ENCODE measurements at regions of chr7 and their contacts with region 1.

Region 1: GRCh38 chr7:49875336-49875735 is 101.9 kb downstream of the VWC2 start:
- DNase-seq: no peak
- ATAC-seq: no peak
- H3K4me3 ChIP-seq: no peak overlapping the region
- H3K27ac ChIP-seq: no peak overlapping the region
- H3K4me1 ChIP-seq: no peaks in the 10 kb centered on the region
- H3K27me3 ChIP-seq: no peaks in the 10 kb centered on the region
- CTCF ChIP-seq: no peak

Region 2: GRCh38 chr7:49885593-49886285 is 10.4 kb after region 1 on chr7:
- CTCF ChIA-PET with region 1: no interaction called
- POLR2A ChIA-PET with region 1: no interaction called
- in situ Hi-C with region 1: no loop called
- intact Hi-C with region 1: no loop called
- DNase-seq: no peak
- ATAC-seq: no peak
- H3K4me3 ChIP-seq: no peak overlapping the region
- H3K27ac ChIP-seq: no peak overlapping the region
- H3K4me1 ChIP-seq: no peaks in the 10 kb centered on the region
- H3K27me3 ChIP-seq: no peaks in the 10 kb centered on the region
- CTCF ChIP-seq: no peak

Region 3: DNA sequence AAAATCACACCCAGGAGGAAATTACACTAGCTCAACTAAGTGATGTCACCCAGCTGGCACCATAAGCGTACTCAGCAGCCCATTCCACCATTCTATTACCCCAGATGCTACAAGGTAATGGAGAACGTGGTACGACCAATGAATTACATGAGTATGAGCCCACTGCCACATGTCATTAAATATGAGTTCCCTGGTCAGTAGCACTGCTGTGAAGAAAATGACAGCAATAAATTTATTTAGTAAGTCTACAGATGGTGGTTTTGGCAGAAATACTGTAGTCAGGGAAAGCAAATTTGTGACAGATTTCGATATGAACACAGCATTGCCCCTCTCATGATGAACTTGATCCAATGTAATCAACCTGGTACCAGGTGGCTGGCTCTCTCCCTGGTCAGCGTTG is 52.3 kb after region 1 on chr7:
- CTCF ChIA-PET with region 1: no interaction called
- POLR2A ChIA-PET with region 1: no interaction called
- in situ Hi-C with region 1: no loop called
- intact Hi-C with region 1: no loop called
- DNase-seq: no peak
- ATAC-seq: no peak
- H3K4me3 ChIP-seq: no peak overlapping the region
- H3K27ac ChIP-seq: no peak overlapping the region
- H3K4me1 ChIP-seq: no peaks in the 10 kb centered on the region
- H3K27me3 ChIP-seq: no peaks in the 10 kb centered on the region
- CTCF ChIP-seq: no peak

Region 4: DNA sequence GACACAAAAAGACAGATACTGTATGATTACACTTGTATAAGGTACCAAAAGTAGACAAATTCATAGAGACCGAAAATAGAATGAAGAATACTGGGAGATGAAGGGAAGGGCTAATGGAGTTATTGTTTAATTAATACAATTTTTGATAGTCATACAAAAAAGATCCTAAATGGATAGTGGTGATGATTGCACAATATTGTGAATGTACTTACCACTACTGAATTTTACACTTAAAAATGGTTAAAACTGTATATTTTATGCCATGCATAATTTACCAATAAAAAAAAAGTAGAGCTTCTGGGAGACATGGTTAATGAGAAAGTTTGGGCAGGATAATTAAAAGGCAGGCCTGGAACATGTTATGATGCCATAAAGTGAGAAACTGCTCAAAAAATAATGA is 98.7 kb after region 1 on chr7:
- CTCF ChIA-PET with region 1: no interaction called
- POLR2A ChIA-PET with region 1: interaction called, 15 read pairs
- in situ Hi-C with region 1: no loop called
- intact Hi-C with region 1: no loop called
- DNase-seq: no peak
- ATAC-seq: no peak
- H3K4me3 ChIP-seq: no peak overlapping the region
- H3K27ac ChIP-seq: no peak overlapping the region
- H3K4me1 ChIP-seq: no peaks in the 10 kb centered on the region
- H3K27me3 ChIP-seq: no peaks in the 10 kb centered on the region
- CTCF ChIP-seq: no peak